ENCODE measurements at regions of chr12 and their contacts with region 1.

Region 1: DNA sequence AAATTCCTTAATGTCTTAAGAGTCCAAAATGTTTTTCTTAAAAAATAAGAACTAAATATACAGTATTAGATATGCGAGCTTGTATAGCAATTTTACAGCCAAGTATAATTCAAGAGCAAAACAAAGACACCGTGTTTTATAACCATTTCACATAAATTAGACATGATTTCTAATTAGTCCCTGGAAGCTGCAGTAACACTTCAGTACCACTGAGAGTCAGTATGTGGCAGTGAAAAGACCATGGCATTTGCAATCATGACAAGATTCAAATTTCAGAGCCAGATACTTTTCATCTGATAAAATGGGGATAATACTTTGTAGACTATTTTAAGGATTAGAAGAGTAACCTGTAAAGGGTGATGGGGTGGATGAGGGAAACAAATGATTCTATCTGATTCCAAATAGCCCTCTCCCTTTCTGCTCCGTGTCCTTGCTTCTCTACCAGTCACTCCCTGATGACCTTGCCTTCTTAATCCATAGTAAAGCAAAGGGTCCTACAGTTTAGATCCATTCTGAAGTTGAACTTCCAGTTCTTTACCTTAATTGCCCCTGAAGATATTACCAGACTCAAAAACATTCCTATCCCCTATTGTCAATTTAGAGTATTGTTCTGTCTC is 145.4 kb upstream of the ABCD2 start:
- DNase-seq: peak in 2 of 5 donors; percentile 52 to 53
- H3K4me3 ChIP-seq: no peak overlapping the region
- H3K27ac ChIP-seq: no peak overlapping the region
- H3K4me1 ChIP-seq: no peaks in the 10 kb centered on the region
- H3K27me3 ChIP-seq: no peaks in the 10 kb centered on the region
- CTCF ChIP-seq: peak; percentile 73

Region 2: DNA sequence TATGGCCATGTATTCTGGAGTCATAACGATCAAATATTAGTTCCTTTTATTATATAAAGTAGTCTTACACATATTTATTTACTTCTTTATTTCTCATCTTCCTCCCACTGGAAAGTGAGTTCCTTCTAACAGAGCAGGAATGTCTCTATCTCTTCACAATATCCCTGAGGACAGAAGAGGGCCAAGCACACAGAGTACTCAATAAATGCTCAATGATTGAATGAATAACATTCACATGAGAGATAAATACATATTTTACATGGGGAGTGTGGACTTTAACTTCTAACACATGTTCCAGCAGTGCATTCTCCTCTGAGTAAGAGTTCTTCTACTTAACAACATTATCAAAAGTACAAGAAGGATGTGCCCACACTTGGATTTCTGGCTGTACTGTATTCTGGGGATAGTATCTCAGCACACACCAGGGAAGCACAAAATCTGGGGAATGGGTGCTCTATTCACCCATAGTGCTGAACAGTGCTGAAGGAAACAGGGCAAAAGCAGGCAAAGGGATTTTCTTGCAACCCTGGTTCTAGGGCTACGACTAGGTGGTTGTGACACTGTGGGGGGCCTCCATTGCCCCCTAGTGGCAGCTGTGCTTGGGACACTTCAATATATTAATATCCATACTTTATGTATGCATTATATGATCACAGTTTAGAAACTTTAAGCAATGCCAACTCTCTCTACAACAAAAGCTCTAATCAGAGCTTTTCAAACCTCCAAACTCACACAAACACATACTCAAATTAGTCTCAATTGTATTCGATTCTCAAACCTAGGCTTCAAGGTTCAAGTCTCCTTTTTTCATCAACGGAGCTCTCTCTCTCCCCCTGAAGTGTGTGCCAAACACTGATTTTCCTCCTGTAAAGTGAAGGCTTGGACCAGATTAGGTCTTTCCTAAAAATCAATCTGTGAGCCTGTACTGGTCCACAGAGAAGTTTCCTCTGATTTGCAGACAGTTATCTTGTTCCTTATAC is 225.4 kb after region 1 on chr12:
- intact Hi-C with region 1: loop called (anchors 10 kb)
- DNase-seq: peak; percentile 37 to 63 (median 42)
- H3K4me3 ChIP-seq: no peak overlapping the region
- H3K27ac ChIP-seq: no peak overlapping the region
- H3K4me1 ChIP-seq: no peaks in the 10 kb centered on the region
- H3K27me3 ChIP-seq: no peaks in the 10 kb centered on the region
- CTCF ChIP-seq: peak; percentile 76